Endothelial cell of umbilical vein (primary cell): ENCODE measurements at regions of chr7 and their contacts with region 1.

Region 1: GRCh38 chr7:2471396-2471795 is 4.8 kb downstream of the GRIFIN start:
- DNase-seq: peak; percentile 34
- H3K4me3 ChIP-seq: no peak overlapping the region
- H3K27ac ChIP-seq: peak overlapping the region; percentile 22
- H3K4me1 ChIP-seq: peaks cover 7% of the 10 kb centered on the region
- H3K27me3 ChIP-seq: no peaks in the 10 kb centered on the region
- CTCF ChIP-seq: no peak
- POLR2A ChIP-seq: no peak

Region 2: GRCh38 chr7:1579481-1580421 is 891.6 kb before region 1 on chr7:
- CTCF ChIA-PET with region 1: interaction called, 12 read pairs
- POLR2A ChIA-PET with region 1: no interaction called
- dilution Hi-C with region 1: no loop called
- intact Hi-C with region 1: loop called (anchors 1 kb)
- DNase-seq: peak; percentile 50
- H3K4me3 ChIP-seq: no peak overlapping the region
- H3K27ac ChIP-seq: no peak overlapping the region
- H3K4me1 ChIP-seq: no peaks in the 10 kb centered on the region
- H3K27me3 ChIP-seq: no peaks in the 10 kb centered on the region
- CTCF ChIP-seq: peak; percentile 67 to 93
- POLR2A ChIP-seq: no peak

Region 3: DNA sequence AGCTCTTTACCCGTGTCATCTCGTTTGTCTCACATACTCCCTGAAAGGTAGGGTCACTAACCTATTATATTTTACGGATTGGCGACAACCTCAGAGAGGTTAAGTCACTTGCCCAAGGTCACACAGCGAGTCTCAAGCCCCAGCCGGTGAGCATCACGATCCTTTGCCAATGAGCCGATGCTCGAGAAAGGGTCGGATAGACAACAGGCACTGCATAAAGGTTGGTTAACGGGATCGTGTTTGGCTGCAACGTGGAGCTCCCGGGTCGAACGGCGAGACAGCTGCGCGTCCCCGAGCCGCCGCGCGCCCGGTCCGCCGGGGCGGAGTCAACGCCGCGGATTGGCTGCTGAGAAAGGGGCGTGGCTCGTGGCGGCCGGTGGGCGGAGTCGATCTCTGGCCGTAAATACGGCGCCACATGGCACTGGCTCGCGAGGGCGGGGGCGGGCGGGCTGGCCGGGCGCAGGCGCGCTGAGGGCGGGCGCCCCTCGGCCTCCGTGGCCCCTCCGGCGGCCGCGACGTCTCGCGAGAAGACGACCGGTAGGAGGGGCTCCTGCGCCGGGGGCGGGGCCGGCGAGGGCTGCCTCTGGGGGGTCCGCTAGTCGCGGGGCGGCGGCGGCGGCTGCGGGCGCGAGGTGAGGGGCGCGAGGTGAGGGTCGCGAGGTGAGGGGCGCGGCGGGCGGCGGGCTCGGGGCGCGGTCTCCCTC is 68.2 kb before region 1 on chr7 and contains the start of gene CHST12:
- CTCF ChIA-PET with region 1: interaction called, 11 read pairs
- POLR2A ChIA-PET with region 1: interaction called, 4 read pairs
- dilution Hi-C with region 1: no loop called
- intact Hi-C with region 1: no loop called
- DNase-seq: peak; percentile 94
- H3K4me3 ChIP-seq: peak within 1 kb of the TSS; percentile 68 to 75 (median 68)
- H3K27ac ChIP-seq: no peak within 1 kb of the TSS
- H3K4me1 ChIP-seq: peaks cover 24% of the 10 kb centered on the region
- H3K27me3 ChIP-seq: no peaks in the 10 kb centered on the region
- CTCF ChIP-seq: no peak
- POLR2A ChIP-seq: peak; percentile 66
- total RNA-seq, gene CHST12: 28.8 and 30.2 TPM in 2 replicates

Region 4: DNA sequence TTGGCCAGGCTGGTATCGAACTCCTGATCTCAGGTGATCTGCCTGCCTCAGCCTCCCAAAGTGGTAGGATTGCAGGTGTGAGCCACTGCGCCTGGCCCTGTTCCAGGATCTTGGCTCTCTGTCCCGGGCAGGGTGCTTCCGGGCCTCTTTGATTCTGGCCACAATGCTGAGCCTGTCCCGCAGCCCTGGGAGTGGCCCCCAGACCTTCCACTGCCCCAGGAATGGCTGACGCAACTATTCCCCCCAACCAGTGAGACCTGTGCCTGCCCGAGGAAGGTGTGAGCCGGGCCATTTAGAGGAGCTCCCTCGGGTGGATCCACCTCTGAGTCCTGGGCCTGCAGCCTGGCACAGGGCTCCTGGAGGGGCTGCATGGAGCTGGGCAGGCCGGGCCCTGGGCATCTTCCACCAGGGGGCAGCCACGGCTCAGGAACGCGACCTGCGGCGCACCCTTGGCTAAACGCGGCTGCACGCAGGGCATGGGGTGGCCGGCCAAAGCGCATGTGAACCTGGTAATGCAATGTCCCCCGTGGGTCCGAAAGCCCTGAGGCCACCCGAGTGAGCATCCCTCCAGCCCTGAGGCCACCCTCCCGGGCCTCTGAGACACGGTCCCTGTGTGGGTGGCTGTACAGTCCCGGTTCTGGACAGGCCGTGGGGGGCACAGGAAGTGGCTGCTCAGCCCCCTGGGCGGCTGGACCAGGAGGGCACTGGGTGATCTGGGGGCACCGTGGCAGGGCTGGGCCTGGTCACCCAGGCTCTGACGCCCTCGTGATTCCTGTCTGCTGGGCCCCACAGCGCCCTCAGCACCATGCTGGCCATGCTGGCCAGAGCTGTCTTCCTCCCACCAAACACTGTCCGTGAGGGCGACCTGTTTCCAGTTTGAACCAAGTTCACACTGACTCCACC is 20.0 kb before region 1 on chr7:
- CTCF ChIA-PET with region 1: interaction called, 226 read pairs
- POLR2A ChIA-PET with region 1: no interaction called
- dilution Hi-C with region 1: no loop called
- intact Hi-C with region 1: loop called (anchors 1 kb)
- DNase-seq: peak; percentile 63
- H3K4me3 ChIP-seq: no peak overlapping the region
- H3K27ac ChIP-seq: no peak overlapping the region
- H3K4me1 ChIP-seq: peaks cover 5% of the 10 kb centered on the region
- H3K27me3 ChIP-seq: no peaks in the 10 kb centered on the region
- CTCF ChIP-seq: peak; percentile 95 to 97
- POLR2A ChIP-seq: no peak

Region 5: DNA sequence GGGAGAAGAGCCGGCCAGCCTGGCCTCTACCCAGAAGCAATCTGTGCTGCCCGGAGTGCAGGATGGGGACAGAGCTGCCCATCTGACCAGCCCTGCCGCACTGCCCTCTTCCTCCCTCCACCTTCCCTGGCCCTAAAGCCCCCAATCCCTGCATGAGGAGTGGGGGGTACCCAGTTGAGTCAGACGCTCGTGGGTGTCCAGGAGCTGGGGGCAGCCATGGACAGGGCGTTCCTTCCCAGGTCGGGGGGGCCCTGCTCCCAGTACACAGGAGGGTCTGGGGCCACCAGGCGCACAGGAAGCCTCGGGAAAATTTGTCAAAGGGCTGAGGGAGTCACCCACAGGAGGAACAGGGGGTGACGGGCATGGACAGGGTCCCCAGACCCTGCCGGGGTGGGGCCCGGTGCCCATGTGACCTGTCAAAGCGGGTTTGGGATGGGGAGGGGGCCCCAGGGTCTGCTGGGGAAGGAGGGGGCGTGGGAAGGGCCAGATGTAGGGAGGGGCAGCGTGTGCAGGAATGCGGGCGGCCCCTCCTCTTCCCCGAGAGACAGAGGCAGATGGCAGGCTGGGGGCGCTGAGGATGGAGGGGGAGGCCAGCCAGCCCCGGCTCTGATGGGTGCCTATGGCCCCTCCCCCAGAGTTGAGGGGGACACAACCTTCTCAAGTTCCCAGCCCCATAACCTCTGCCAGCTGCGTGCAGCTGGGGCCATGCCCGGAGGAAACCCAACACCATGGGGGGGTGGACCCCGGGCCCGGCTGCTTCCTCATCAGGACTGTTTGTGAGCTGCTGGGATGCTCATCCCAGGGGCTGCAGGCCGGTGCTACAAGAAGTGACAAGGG is 26.3 kb after region 1 on chr7:
- CTCF ChIA-PET with region 1: interaction called, 16 read pairs
- POLR2A ChIA-PET with region 1: no interaction called
- dilution Hi-C with region 1: no loop called
- intact Hi-C with region 1: no loop called
- DNase-seq: no peak
- H3K4me3 ChIP-seq: no peak overlapping the region
- H3K27ac ChIP-seq: no peak overlapping the region
- H3K4me1 ChIP-seq: no peaks in the 10 kb centered on the region
- H3K27me3 ChIP-seq: no peaks in the 10 kb centered on the region
- CTCF ChIP-seq: no peak
- POLR2A ChIP-seq: no peak